Prostate gland (tissue), 2 donors: ENCODE measurements at regions of chr18 and their contacts with region 1.

Region 1: DNA sequence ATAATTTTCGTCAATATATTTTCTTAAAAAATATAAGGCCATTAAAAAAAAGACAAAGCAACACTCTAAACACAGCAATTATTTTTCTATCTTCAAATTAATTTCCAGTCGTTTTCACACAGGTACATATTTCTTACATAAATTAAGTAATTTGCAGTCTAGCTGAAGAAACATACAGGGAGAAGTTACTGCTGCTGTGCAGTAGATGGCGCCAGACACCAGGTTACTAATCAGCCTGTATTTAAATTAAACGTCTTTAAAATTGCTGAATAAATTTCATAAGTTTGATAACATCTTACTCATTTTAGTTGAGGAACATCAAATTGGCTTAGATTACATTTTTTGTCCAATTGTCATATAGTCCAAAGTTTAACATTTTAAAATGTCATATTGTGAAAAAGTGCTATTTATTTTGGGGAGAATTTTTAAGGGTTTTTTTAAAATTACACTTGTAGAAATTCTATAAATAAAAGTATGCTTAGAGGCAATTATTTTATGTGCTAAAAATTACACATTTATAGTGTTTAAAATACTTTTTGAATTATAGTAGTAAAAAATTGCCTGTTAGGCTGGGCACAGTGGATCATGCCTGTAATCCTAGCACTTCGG is 88.4 kb downstream of the PMAIP1 start:
- DNase-seq: peak; percentile 34
- H3K4me3 ChIP-seq: no peak overlapping the region
- H3K27ac ChIP-seq: no peak overlapping the region
- H3K4me1 ChIP-seq: no peaks in the 10 kb centered on the region
- H3K27me3 ChIP-seq: no peaks in the 10 kb centered on the region
- CTCF ChIP-seq: peak in 3 of 4 experiments; percentile 72 to 88 (median 83)
- POLR2A ChIP-seq: no peak

Region 2: DNA sequence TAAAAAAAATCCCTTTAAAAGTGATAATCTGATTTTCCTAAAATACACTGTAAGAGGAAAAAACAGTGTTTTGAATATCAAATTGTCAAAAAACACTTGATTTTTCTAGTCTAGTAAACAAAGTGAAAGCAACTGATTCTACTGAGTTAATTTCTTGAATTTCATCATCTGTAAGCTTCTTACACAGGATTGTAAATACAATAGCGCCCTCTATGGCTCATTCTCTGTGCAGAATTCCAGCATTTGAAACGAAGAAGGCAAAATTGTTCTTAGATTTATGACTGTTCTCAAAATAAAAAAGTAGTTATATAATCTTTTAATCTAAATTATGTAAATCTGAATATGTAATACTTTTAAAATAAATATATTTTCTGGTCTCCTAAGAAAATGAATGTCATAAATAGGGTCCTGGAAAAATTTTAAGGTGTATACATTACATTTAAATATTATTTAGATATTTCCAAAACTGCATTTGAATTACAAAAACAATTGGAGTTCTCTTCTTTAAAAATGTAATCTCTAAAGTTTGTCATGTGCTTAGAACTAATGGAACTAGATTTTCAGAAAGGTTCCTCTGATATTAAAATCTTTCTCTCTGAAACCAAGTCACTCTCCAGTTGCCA is 561.2 kb after region 1 on chr18:
- intact Hi-C with region 1: loop called (anchors 5 kb)
- DNase-seq: peak; percentile 11
- H3K4me3 ChIP-seq: no peak overlapping the region
- H3K27ac ChIP-seq: no peak overlapping the region
- H3K4me1 ChIP-seq: no peaks in the 10 kb centered on the region
- H3K27me3 ChIP-seq: no peaks in the 10 kb centered on the region
- CTCF ChIP-seq: peak; percentile 42 to 71 (median 57)
- POLR2A ChIP-seq: no peak